ENCODE measurements at regions of chr7 and their contacts with region 1.

Region 1: GRCh38 chr7:143416565-143417149 is 8.0 kb upstream of the EPHA1 start:
- DNase-seq: peak; percentile 54
- H3K4me3 ChIP-seq: no peak overlapping the region
- H3K27ac ChIP-seq: no peak overlapping the region
- H3K4me1 ChIP-seq: no peaks in the 10 kb centered on the region
- CTCF ChIP-seq: peak; percentile 96

Region 2: GRCh38 chr7:143240291-143241168 is 176.1 kb before region 1 on chr7:
- CTCF ChIA-PET with region 1: interaction called, 6 read pairs
- POLR2A ChIA-PET with region 1: no interaction called
- intact Hi-C with region 1: loop called (anchors 1 kb)
- DNase-seq: peak; percentile 74
- H3K4me3 ChIP-seq: no peak overlapping the region
- H3K27ac ChIP-seq: no peak overlapping the region
- H3K4me1 ChIP-seq: no peaks in the 10 kb centered on the region
- CTCF ChIP-seq: peak; percentile 98

Region 3: DNA sequence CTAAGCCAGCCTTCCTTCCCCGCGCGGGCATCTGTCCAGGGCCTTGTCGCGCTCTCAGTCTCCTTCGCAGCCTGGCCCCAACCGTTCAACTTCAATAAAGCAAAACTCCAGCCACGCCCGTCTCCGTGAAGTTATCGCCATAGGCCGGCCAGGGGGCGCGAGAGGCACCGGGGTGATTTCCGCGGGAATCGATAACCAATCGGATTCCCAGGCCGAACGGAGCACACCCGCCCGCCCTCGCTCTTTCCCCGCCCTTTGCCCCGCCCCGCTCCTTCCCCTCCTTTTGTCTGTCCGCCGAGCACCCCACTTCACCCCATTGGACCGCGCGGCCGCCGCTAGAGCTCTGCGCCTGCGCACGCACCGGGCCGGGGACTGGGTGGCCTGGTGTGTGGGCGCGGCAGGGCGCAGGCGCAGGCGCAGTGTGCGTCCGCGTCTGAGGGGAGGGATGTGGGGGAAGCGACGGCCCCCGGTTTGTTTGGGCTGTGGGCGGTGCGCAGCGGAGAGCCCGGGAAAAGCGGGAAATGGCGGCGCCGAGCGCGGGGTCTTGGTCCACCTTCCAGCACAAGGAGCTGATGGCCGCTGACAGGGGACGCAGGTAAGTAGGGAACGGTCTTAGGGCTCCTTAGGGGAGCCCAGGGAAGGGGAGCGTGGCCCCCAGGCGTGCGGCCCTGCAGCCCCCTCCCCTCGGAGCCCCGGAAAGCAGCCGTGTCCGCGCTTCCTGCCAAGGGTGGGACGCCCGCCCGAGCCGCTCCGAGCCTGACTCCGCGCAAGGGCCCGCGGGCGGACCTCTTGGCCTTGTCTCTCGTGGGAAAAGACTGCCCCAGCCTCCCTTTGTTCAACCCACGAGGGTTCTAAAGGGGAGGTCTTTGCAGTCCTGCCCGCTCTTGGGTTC is 128.5 kb before region 1 on chr7 and contains the start of gene CASP2:
- CTCF ChIA-PET with region 1: no interaction called
- POLR2A ChIA-PET with region 1: no interaction called
- intact Hi-C with region 1: no loop called
- DNase-seq: peak; percentile 96
- H3K4me3 ChIP-seq: peak within 1 kb of the TSS; percentile 95
- H3K27ac ChIP-seq: peak within 1 kb of the TSS; percentile 66
- H3K4me1 ChIP-seq: peaks cover 36% of the 10 kb centered on the region
- CTCF ChIP-seq: 0 out of 2 replicates have a peak, but pooled peaks have one; percentile 34
- total RNA-seq, gene CASP2: 27.2 and 33.9 TPM in 2 replicates

Region 4: GRCh38 chr7:143325240-143325639 is 91.4 kb before region 1 on chr7:
- CTCF ChIA-PET with region 1: no interaction called
- POLR2A ChIA-PET with region 1: no interaction called
- intact Hi-C with region 1: loop called (anchors 5 kb)
- DNase-seq: peak; percentile 22
- H3K4me3 ChIP-seq: peak overlapping the region; percentile 19
- H3K27ac ChIP-seq: no peak overlapping the region
- H3K4me1 ChIP-seq: peaks cover 31% of the 10 kb centered on the region
- CTCF ChIP-seq: no peak

Region 5: GRCh38 chr7:143380255-143380645 is 36.4 kb before region 1 on chr7:
- CTCF ChIA-PET with region 1: no interaction called
- POLR2A ChIA-PET with region 1: no interaction called
- intact Hi-C with region 1: loop called (anchors 1 kb)
- DNase-seq: peak; percentile 79
- H3K4me3 ChIP-seq: peak overlapping the region; percentile 76
- H3K27ac ChIP-seq: no peak overlapping the region
- H3K4me1 ChIP-seq: peaks cover 6% of the 10 kb centered on the region
- CTCF ChIP-seq: peak; percentile 91